ENCODE measurements at regions of chr2 and their contacts with region 1.

Region 1: GRCh38 chr2:157327621-157328500 is 2.2 kb upstream of the ERMN start:
- DNase-seq: peak; percentile 95
- ATAC-seq: peak; percentile 93
- H3K4me3 Mint-ChIP-seq: peak overlapping the region; percentile 45
- H3K27ac Mint-ChIP-seq: peak overlapping the region; percentile 80
- H3K4me1 Mint-ChIP-seq: peaks cover 59% of the 10 kb centered on the region
- H3K27me3 Mint-ChIP-seq: no peaks in the 10 kb centered on the region
- CTCF ChIP-seq: peak; percentile 93

Region 2: DNA sequence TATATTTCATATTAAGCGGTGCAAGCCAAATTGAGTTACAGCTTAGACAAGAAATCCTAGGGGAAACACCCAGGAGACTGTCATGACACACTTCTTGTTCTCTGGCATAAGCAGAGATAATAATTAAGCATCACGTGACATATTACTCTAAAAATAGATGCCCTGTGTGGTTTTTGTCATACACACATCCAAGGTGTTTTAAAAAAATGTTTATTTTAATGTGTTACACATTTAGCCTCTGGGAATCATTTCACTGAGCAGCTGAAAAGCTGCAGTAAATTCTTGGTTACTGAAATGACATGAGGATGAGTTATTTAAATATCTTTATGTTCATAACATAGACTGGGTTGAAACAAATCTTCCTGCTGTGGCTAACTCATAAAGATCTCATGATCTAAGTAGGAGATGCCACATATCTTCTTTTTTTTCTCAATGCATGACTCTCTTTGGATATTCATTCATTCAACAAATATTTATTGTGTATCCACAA is 35.8 kb after region 1 on chr2:
- CTCF ChIA-PET with region 1: interaction called, 10 read pairs
- POLR2A ChIA-PET with region 1: interaction called, 3 read pairs
- intact Hi-C with region 1: no loop called
- DNase-seq: no peak
- ATAC-seq: peak; percentile 43
- H3K4me3 Mint-ChIP-seq: no peak overlapping the region
- H3K27ac Mint-ChIP-seq: peak overlapping the region; percentile 43
- H3K4me1 Mint-ChIP-seq: peaks cover 38% of the 10 kb centered on the region
- H3K27me3 Mint-ChIP-seq: no peaks in the 10 kb centered on the region
- CTCF ChIP-seq: no peak

Region 3: DNA sequence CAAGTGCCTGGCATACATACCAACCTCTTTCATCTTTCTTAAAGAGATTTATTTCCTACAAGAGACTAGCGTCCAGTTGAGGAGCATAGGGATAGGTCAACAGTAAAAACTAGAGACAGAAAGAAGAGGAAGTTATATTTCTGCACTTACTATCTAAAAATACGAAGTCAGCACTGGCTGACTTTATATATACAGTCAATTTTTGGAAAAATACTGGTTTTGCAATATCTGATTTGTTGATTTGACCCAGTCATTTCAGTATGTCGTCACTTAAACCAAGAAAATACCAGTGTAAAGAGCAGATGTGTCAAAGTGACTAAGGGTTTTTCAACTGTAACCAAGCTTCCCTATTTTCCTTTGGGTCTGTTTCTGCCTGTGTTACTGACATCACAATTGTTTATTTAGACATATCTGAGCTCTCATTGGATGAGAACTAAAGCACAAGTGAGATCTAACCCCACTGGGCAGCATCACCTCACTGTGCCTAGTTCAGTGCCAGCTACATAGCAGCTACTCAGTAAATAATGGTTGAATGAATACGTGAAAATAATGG is 93.0 kb after region 1 on chr2:
- CTCF ChIA-PET with region 1: interaction called, 172 read pairs
- POLR2A ChIA-PET with region 1: interaction called, 52 read pairs
- intact Hi-C with region 1: no loop called
- DNase-seq: peak; percentile 59
- ATAC-seq: peak; percentile 49
- H3K4me3 Mint-ChIP-seq: peak overlapping the region; percentile 46
- H3K27ac Mint-ChIP-seq: peak overlapping the region; percentile 95
- H3K4me1 Mint-ChIP-seq: peaks cover 80% of the 10 kb centered on the region
- H3K27me3 Mint-ChIP-seq: no peaks in the 10 kb centered on the region
- CTCF ChIP-seq: no peak

Region 4: GRCh38 chr2:157443795-157444640 is 116.2 kb after region 1 on chr2 and contains the start of gene CYTIP:
- CTCF ChIA-PET with region 1: interaction called, 13 read pairs
- POLR2A ChIA-PET with region 1: interaction called, 26 read pairs
- intact Hi-C with region 1: no loop called
- DNase-seq: peak; percentile 82
- ATAC-seq: peak; percentile 43
- H3K4me3 Mint-ChIP-seq: peak within 1 kb of the TSS; percentile 90
- H3K27ac Mint-ChIP-seq: peak within 1 kb of the TSS; percentile 94
- H3K4me1 Mint-ChIP-seq: peaks cover 35% of the 10 kb centered on the region
- H3K27me3 Mint-ChIP-seq: no peaks in the 10 kb centered on the region
- CTCF ChIP-seq: no peak
- total RNA-seq, gene CYTIP: 514 to 520 TPM

Region 5: DNA sequence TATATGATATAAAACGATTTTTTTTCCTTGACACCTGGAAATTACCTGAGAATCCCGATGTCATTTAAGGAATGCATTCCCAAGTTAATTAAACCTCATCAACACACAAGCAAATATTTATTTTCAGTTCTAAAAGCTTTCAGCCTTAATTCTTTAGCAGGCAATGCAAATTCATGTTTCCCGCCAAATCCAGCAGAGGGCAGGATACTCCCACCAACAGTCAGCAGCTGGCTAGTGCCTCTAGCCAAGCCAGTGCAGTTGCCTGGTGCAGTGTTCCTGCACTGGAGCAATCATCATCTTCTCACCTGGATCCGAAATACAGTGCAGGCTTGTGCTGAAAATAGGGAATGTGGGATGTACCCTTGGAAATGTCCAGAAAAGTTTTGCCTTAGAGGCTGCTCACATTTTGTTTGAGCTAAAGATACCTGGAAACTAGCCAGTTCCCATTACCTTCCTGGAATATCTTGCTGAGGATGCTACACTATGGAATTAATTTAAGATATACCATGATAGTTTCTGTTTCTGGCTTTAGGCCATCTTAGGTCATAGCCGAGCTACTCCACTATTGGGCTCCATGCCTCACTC is 164.4 kb after region 1 on chr2:
- CTCF ChIA-PET with region 1: interaction called, 21 read pairs
- POLR2A ChIA-PET with region 1: interaction called, 3 read pairs
- intact Hi-C with region 1: no loop called
- DNase-seq: peak; percentile 85
- ATAC-seq: peak; percentile 86
- H3K4me3 Mint-ChIP-seq: no peak overlapping the region
- H3K27ac Mint-ChIP-seq: no peak overlapping the region
- H3K4me1 Mint-ChIP-seq: peaks cover 65% of the 10 kb centered on the region
- H3K27me3 Mint-ChIP-seq: no peaks in the 10 kb centered on the region
- CTCF ChIP-seq: peak; percentile 82

Measured in activated CD8-positive, alpha-beta T cell treated with anti-CD3 and anti-CD28 coated beads for 36 hours (primary cell).